MCF 10A (cell line): ENCODE measurements at regions of chrX and their contacts with region 1.

Region 1: GRCh38 chrX:140918407-140919038 is 83.9 kb upstream of the SPANXB1 start:
- DNase-seq: peak; percentile 73
- H3K4me3 Mint-ChIP-seq: no peak overlapping the region
- H3K27ac Mint-ChIP-seq: peak overlapping the region; percentile 41
- H3K4me1 Mint-ChIP-seq: peaks cover 7% of the 10 kb centered on the region
- H3K27me3 Mint-ChIP-seq: no peaks in the 10 kb centered on the region
- CTCF ChIP-seq: peak; percentile 91

Region 2: DNA sequence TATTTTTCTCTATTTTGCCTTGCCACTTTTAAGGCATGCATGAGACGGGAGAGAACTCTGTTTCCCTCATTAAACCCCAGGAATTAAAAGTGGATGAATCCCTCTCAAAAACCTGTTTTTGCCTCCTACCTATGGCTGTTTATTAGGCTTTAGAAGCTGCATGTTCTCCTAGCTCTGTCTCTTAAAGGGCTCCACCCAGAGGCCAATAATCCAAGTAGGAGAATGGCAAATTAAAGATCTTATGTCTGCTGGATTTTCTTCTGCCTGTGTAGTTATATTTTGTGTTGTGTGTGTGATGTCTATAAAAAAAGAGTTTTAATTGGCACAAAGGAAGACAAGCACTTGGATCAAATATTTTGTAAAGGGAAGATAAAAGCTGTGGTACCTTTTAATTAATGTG is 1017.6 kb after region 1 on chrX:
- CTCF ChIA-PET with region 1: interaction called, 5 read pairs
- POLR2A ChIA-PET with region 1: no interaction called
- intact Hi-C with region 1: loop called (anchors 2 kb)
- DNase-seq: peak; percentile 36
- H3K4me3 Mint-ChIP-seq: no peak overlapping the region
- H3K27ac Mint-ChIP-seq: no peak overlapping the region
- H3K4me1 Mint-ChIP-seq: no peaks in the 10 kb centered on the region
- H3K27me3 Mint-ChIP-seq: no peaks in the 10 kb centered on the region
- CTCF ChIP-seq: no peak

Region 3: GRCh38 chrX:142089198-142089597 is 1170.7 kb after region 1 on chrX:
- CTCF ChIA-PET with region 1: interaction called, 6 read pairs
- POLR2A ChIA-PET with region 1: no interaction called
- intact Hi-C with region 1: loop called (anchors 1 kb)
- DNase-seq: peak; percentile 54
- H3K4me3 Mint-ChIP-seq: no peak overlapping the region
- H3K27ac Mint-ChIP-seq: no peak overlapping the region
- H3K4me1 Mint-ChIP-seq: no peaks in the 10 kb centered on the region
- H3K27me3 Mint-ChIP-seq: no peaks in the 10 kb centered on the region
- CTCF ChIP-seq: peak; percentile 72